ENCODE measurements at regions of chr17 and their contacts with region 1.

Region 1: GRCh38 chr17:50478391-50479381 is at the start of gene RSAD1:
- DNase-seq: peak; percentile 96
- H3K4me3 Mint-ChIP-seq: peak within 1 kb of the TSS; percentile 65
- H3K27ac Mint-ChIP-seq: peak within 1 kb of the TSS; percentile 87
- H3K4me1 Mint-ChIP-seq: peaks cover 45% of the 10 kb centered on the region
- H3K27me3 Mint-ChIP-seq: no peaks in the 10 kb centered on the region
- CTCF ChIP-seq: peak; percentile 96
- total RNA-seq, gene RSAD1: 42.6 and 51.1 TPM in 2 replicates

Region 2: DNA sequence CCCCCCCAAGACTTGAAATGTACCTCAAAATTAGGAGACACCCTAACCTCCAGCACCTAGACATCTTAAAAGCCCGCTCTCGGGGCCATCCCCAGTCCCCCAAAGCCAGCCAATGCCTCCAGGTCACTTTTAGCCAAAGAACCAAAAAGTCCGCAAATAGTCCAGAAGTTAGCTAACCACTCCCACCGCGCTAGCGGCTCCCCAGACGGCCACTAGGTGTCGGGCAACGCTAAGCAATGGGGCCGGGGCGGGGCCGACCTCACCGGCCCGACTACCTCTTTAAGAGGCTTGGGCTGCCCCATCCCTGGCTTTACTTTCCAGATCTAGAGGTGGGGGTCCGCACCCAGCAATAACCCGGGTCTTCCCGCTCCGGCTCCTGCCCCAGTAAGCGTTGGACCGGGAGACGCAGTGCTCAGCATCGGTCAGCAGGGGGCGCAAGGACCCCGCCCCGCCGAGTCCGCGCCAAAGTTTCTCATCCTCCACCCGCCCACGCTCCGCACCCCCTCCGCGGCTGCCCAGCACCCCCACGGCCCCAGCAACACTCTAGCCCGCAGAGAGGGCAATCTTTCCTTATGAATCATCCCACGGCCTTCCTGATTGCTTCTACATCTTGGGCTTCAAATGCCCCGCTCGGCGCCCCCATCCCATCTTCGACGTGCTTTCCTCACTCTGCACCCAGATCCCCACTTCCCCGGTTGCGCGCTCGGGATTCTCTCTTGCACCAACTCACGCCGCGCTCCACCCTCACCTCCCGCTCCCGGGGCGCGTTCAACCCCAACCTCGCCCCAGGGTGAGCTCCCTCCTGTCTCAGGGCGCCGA is 278.0 kb before region 1 on chr17:
- CTCF ChIA-PET with region 1: interaction called, 9 read pairs
- intact Hi-C with region 1: loop called (anchors 2 kb)
- DNase-seq: peak; percentile 95
- H3K4me3 Mint-ChIP-seq: peak overlapping the region; percentile 68
- H3K27ac Mint-ChIP-seq: peak overlapping the region; percentile 33
- H3K4me1 Mint-ChIP-seq: peaks cover 21% of the 10 kb centered on the region
- H3K27me3 Mint-ChIP-seq: peaks cover 88% of the 10 kb centered on the region
- CTCF ChIP-seq: peak; percentile 100

Region 3: GRCh38 chr17:50397111-50397918 is 81.4 kb before region 1 on chr17 and contains the start of gene LRRC59:
- CTCF ChIA-PET with region 1: interaction called, 28 read pairs
- intact Hi-C with region 1: loop called (anchors 2 kb)
- DNase-seq: peak; percentile 98
- H3K4me3 Mint-ChIP-seq: peak within 1 kb of the TSS; percentile 87
- H3K27ac Mint-ChIP-seq: peak within 1 kb of the TSS; percentile 86
- H3K4me1 Mint-ChIP-seq: peaks cover 47% of the 10 kb centered on the region
- H3K27me3 Mint-ChIP-seq: no peaks in the 10 kb centered on the region
- CTCF ChIP-seq: peak; percentile 100
- total RNA-seq, gene LRRC59: 205 and 212 TPM in 2 replicates

Region 4: DNA sequence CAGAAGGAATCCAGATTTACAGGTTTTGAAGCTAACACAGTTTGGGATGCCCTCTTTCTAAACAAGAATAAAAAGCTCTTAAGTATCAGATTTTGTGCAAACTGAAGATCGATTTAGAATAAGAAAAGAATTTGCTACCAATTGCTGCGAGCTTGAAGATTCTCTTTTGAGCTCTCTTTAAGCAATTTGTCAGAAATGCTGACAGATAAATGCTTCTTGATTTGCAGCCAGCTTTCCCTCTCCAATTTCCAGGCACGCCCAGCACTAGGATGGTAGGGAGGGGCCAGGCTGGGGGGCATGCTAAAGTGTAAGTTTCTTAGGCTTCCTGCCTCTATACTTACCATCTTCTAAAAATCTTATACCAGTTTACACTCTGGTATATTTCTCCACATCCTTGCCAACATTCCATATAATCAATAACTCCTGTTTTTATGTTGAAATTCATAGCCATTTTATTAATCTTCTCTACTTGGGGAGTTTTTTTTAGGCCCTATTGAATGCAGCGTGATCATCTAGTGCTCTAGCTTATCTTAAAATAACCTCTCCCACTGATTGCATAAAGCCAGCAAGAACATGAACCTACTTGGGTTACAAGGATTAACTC is 35.2 kb before region 1 on chr17:
- CTCF ChIA-PET with region 1: interaction called, 4 read pairs
- intact Hi-C with region 1: loop called (anchors 5 kb)
- DNase-seq: no peak
- H3K4me3 Mint-ChIP-seq: peak overlapping the region; percentile 20
- H3K27ac Mint-ChIP-seq: peak overlapping the region; percentile 62
- H3K4me1 Mint-ChIP-seq: peaks cover 52% of the 10 kb centered on the region
- H3K27me3 Mint-ChIP-seq: no peaks in the 10 kb centered on the region
- CTCF ChIP-seq: no peak

Region 5: DNA sequence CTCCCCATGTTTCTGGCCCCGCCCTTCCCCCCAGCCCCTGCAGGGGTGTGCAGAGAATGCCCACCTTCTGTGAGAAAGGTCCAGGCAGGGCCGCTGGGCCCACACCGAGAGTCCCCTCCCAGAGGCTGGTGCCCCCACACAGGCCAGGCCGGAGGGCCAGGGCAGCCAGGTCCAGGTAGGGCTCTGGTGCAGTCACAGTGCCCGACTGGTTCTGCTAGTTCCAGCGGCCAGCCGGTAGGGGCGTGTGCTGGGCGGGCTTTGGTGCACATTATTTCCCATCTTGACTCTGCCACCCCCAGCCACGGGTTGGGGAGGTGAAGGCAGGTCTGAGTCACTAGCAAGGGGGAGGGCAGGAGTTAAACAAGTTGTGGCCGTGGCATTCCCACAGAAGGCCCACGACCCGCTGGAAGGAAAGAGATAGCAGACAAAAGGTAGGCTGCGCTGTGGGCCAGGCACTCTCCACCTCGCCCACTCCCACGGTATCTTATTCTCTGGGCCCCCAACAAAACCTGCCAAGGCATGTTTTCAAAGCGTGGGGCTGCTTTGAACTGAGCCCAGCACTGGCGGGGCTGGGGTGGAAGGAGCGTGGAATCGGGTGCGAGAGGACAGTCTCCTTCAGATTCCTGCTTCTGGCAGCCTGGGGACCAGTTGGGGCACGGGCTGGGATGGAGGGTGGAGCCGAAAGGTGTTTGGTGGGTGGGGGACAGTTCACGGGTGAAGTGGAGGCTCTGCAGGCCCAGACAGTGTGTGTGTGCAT is 55.7 kb after region 1 on chr17:
- CTCF ChIA-PET with region 1: interaction called, 3 read pairs
- intact Hi-C with region 1: loop called (anchors 1 kb)
- DNase-seq: peak; percentile 92
- H3K4me3 Mint-ChIP-seq: peak overlapping the region; percentile 85
- H3K27ac Mint-ChIP-seq: peak overlapping the region; percentile 63
- H3K4me1 Mint-ChIP-seq: peaks cover 47% of the 10 kb centered on the region
- H3K27me3 Mint-ChIP-seq: peaks cover 5% of the 10 kb centered on the region
- CTCF ChIP-seq: peak; percentile 96

Region 6: GRCh38 chr17:50626037-50626574 is 147.4 kb after region 1 on chr17:
- CTCF ChIA-PET with region 1: interaction called, 3 read pairs
- intact Hi-C with region 1: loop called (anchors 1 kb)
- DNase-seq: peak; percentile 89
- H3K4me3 Mint-ChIP-seq: no peak overlapping the region
- H3K27ac Mint-ChIP-seq: no peak overlapping the region
- H3K4me1 Mint-ChIP-seq: peaks cover 28% of the 10 kb centered on the region
- H3K27me3 Mint-ChIP-seq: peaks cover 14% of the 10 kb centered on the region
- CTCF ChIP-seq: peak; percentile 96

Region 7: GRCh38 chr17:50841949-50842354 is 363.3 kb after region 1 on chr17:
- CTCF ChIA-PET with region 1: no interaction called
- intact Hi-C with region 1: loop called (anchors 1 kb)
- DNase-seq: peak; percentile 91
- H3K4me3 Mint-ChIP-seq: no peak overlapping the region
- H3K27ac Mint-ChIP-seq: no peak overlapping the region
- H3K4me1 Mint-ChIP-seq: peaks cover 8% of the 10 kb centered on the region
- H3K27me3 Mint-ChIP-seq: peaks cover 6% of the 10 kb centered on the region
- CTCF ChIP-seq: peak; percentile 83